Adrenal gland (tissue), 19 donors: ENCODE measurements at regions of chr22 and their contacts with region 1.

Region 1: DNA sequence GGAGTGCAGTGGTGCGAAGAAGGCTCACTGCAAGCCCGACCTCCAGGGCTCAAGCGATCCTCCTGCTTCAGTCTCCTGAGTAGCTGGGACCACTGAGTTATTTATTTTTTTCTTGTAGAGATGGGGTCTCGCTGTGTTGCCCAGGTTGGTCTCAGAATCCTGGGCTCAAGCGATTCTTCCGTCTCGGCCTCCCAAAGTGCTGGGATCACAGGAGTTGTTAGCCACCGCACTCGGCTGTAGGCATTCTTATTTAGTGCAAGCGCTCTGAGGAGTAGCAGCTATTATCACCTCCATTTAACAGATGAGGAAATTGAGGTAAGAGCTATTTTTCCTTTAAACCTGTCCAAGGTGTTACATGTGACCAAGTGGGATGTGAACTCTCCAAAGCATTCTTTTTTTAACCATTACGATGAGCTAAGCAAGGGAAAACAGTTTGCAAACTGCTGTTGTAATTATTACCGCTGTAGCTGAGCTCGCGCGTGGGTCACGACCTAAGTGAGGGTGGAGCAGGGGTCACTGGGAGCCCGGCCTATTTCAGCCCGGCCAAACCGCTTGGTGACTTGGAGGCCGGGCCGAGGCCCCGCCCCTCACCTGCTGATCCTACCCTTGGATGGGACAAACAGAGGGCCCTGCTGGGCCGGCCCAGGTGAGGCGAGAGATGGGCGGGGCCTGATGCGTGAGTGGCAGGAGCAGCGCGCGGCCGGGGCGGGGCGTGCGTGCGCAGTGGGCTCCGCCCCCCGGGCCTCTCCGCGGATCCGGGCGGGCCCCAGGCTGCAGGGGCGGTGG is 449 bp upstream of the KREMEN1 start:
- DNase-seq: peak; percentile 75 to 90 (median 88)
- H3K4me3 ChIP-seq: peak overlapping the region in 1 of 4 donors; percentile 76
- H3K27ac ChIP-seq: peak overlapping the region in 1 of 5 donors; percentile 67
- H3K4me1 ChIP-seq: peaks cover 9 to 42% of the 10 kb centered on the region in 2 donors
- H3K27me3 ChIP-seq: no peaks in the 10 kb centered on the region
- CTCF ChIP-seq: no peak
- POLR2A ChIP-seq: no peak

Region 2: DNA sequence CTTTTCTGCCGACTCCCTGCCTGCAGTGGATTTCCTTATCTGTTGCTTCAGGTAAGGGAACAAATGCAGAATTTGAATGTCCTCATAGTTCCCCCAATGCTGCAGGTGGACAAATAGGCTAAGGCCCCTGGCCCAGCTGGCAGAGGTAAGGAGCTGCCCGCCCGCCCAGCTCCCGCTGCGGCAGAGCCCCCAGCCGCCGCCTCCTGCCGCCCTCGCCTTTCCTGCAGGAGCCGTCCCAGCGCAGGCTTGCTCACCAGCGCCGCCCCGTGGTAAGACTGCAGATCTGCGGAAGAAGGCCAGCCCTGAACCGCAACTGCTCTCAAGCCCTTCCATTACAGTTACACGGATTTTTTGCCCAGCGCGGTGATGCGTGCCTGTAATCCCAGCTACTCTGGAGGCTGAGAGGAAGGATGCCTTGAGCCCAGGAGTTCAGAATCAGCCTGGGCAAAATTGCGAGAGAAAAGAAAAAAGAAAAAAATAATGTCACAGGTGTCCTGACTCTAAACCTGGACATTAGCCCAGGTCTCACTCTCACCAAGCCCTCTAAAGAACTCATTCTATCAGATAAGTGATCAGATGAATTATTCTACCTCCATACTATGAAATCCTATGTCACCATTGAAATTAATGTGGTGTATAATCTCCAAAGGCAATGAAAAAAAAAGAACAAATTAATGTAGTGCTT is 82.1 kb after region 1 on chr22:
- intact Hi-C with region 1: loop called (anchors 5 to 10 kb)
- DNase-seq: peak; percentile 70 to 88 (median 81)
- H3K4me3 ChIP-seq: peak overlapping the region in 2 of 4 donors; percentile 11 to 45
- H3K27ac ChIP-seq: no peak overlapping the region
- H3K4me1 ChIP-seq: peaks cover 40 to 43% of the 10 kb centered on the region in 2 donors
- H3K27me3 ChIP-seq: no peaks in the 10 kb centered on the region
- CTCF ChIP-seq: peak; percentile 83 to 98 (median 95)
- POLR2A ChIP-seq: no peak

Region 3: GRCh38 chr22:29259253-29259899 is 187.0 kb after region 1 on chr22:
- intact Hi-C with region 1: no loop called
- DNase-seq: no peak
- H3K4me3 ChIP-seq: no peak overlapping the region
- H3K27ac ChIP-seq: no peak overlapping the region
- H3K4me1 ChIP-seq: no peaks in the 10 kb centered on the region
- H3K27me3 ChIP-seq: no peaks in the 10 kb centered on the region
- CTCF ChIP-seq: no peak
- POLR2A ChIP-seq: no peak